B cell (primary cell): ENCODE measurements at regions of chr3 and their contacts with region 1.

Region 1: GRCh38 chr3:100708967-100709841 is at the start of gene TFG:
- DNase-seq: peak; percentile 99
- ATAC-seq: peak; percentile 94
- H3K4me3 ChIP-seq: peak within 1 kb of the TSS; percentile 47 to 85 (median 78)
- H3K4me3 Mint-ChIP-seq: peak within 1 kb of the TSS; percentile 92
- H3K27ac ChIP-seq: peak within 1 kb of the TSS; percentile 76 to 90
- H3K27ac Mint-ChIP-seq: peak within 1 kb of the TSS; percentile 97
- H3K4me1 ChIP-seq: peaks cover 19 to 21% of the 10 kb centered on the region in 2 donors
- H3K4me1 Mint-ChIP-seq: peaks cover 36% of the 10 kb centered on the region
- H3K27me3 ChIP-seq: peaks cover 0 to 21% (median 8%) of the 10 kb centered on the region in 4 experiments
- H3K27me3 Mint-ChIP-seq: peaks cover 22% of the 10 kb centered on the region
- CTCF ChIP-seq: no peak
- total RNA-seq, gene TFG: 44.0 and 51.6 TPM in 2 replicates

Region 2: DNA sequence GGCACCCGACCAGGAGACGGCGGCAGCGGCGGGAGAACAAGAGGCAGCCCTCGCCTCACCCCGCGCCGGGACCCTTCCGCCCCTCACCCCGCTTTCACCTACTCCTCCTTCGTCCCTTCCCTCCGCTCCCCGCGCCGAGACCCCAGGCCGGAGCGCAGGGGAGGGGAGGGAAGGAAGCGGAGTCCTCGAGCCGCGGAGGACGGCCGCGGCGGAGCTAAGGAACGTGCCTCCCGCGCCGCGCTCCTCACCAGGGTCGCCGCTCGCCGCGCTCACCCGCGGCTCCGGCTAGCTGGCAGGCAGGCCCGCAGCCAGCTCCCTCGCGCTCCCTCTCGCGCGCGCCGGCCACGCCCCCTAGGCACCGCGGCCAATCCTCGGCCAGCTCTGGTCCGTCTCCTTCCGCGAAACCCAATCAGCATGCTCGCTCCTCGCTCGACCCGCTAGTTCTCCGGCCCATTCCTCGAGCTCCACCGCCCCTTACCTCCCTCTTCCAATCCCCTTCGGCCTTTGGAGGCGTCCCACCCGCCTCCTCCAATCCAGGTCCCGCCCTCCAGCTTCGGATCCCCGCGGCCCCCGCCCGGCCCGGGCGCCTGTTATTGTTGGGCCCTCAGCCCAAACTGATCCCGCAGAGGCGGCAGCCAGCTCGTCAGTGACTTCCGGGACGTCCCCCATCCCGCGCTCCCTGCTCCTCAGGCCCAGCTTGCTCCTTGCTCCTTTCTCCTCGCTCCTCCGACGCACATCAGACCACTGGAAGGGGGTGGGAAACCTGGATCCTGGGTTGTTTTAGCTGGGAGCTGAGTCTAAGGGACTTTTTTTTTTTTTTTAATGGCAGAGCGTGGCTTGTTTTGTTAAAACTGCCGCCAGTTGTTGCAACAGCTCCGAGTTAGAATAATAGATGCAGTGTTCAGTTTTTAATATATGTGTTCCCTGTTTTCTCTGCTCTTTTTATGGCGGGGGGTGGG is 1807.5 kb before region 1 on chr3 and contains the start of gene DCBLD2:
- CTCF ChIA-PET with region 1: no interaction called
- POLR2A ChIA-PET with region 1: no interaction called
- intact Hi-C with region 1: loop called (anchors 5 kb)
- DNase-seq: peak; percentile 95
- ATAC-seq: peak; percentile 98
- H3K4me3 ChIP-seq: peak within 1 kb of the TSS; percentile 60 to 93 (median 68)
- H3K4me3 Mint-ChIP-seq: peak within 1 kb of the TSS; percentile 97
- H3K27ac ChIP-seq: peak within 1 kb of the TSS in 1 of 2 donors; percentile 64
- H3K27ac Mint-ChIP-seq: peak within 1 kb of the TSS; percentile 84
- H3K4me1 ChIP-seq: peaks cover 10 to 12% of the 10 kb centered on the region in 2 donors
- H3K4me1 Mint-ChIP-seq: peaks cover 17% of the 10 kb centered on the region
- H3K27me3 ChIP-seq: peaks cover 0 to 7% (median 2%) of the 10 kb centered on the region in 4 experiments
- H3K27me3 Mint-ChIP-seq: peaks cover 12% of the 10 kb centered on the region
- CTCF ChIP-seq: no peak
- total RNA-seq, gene DCBLD2: 2.1 and 3.5 TPM in 2 replicates

Region 3: GRCh38 chr3:100334488-100335351 is 374.5 kb before region 1 on chr3 and contains the start of gene NIT2:
- CTCF ChIA-PET with region 1: no interaction called
- POLR2A ChIA-PET with region 1: no interaction called
- intact Hi-C with region 1: loop called (anchors 1 kb)
- DNase-seq: peak; percentile 88
- ATAC-seq: peak; percentile 98
- H3K4me3 ChIP-seq: peak within 1 kb of the TSS; percentile 54 to 82 (median 72)
- H3K4me3 Mint-ChIP-seq: peak within 1 kb of the TSS; percentile 96
- H3K27ac ChIP-seq: peak within 1 kb of the TSS; percentile 54 to 79
- H3K27ac Mint-ChIP-seq: peak within 1 kb of the TSS; percentile 91
- H3K4me1 ChIP-seq: peaks cover 5 to 16% of the 10 kb centered on the region in 2 donors
- H3K4me1 Mint-ChIP-seq: peaks cover 23% of the 10 kb centered on the region
- H3K27me3 ChIP-seq: no peaks in the 10 kb centered on the region
- H3K27me3 Mint-ChIP-seq: no peaks in the 10 kb centered on the region
- CTCF ChIP-seq: no peak
- total RNA-seq, gene NIT2: 34.4 and 36.5 TPM in 2 replicates

Region 4: GRCh38 chr3:100650651-100651611 is 58.3 kb before region 1 on chr3:
- CTCF ChIA-PET with region 1: no interaction called
- POLR2A ChIA-PET with region 1: no interaction called
- intact Hi-C with region 1: loop called (anchors 1 kb)
- DNase-seq: peak; percentile 66
- ATAC-seq: peak; percentile 74
- H3K4me3 ChIP-seq: peak overlapping the region in 1 of 5 experiments; percentile 11
- H3K4me3 Mint-ChIP-seq: peak overlapping the region; percentile 41
- H3K27ac ChIP-seq: peak overlapping the region in 1 of 2 donors; percentile 52
- H3K27ac Mint-ChIP-seq: peak overlapping the region; percentile 57
- H3K4me1 ChIP-seq: peaks cover 5 to 8% of the 10 kb centered on the region in 2 donors
- H3K4me1 Mint-ChIP-seq: peaks cover 8% of the 10 kb centered on the region
- H3K27me3 ChIP-seq: no peaks in the 10 kb centered on the region
- H3K27me3 Mint-ChIP-seq: peaks cover under 1% of the 10 kb centered on the region
- CTCF ChIP-seq: peak; percentile 33

Region 5: DNA sequence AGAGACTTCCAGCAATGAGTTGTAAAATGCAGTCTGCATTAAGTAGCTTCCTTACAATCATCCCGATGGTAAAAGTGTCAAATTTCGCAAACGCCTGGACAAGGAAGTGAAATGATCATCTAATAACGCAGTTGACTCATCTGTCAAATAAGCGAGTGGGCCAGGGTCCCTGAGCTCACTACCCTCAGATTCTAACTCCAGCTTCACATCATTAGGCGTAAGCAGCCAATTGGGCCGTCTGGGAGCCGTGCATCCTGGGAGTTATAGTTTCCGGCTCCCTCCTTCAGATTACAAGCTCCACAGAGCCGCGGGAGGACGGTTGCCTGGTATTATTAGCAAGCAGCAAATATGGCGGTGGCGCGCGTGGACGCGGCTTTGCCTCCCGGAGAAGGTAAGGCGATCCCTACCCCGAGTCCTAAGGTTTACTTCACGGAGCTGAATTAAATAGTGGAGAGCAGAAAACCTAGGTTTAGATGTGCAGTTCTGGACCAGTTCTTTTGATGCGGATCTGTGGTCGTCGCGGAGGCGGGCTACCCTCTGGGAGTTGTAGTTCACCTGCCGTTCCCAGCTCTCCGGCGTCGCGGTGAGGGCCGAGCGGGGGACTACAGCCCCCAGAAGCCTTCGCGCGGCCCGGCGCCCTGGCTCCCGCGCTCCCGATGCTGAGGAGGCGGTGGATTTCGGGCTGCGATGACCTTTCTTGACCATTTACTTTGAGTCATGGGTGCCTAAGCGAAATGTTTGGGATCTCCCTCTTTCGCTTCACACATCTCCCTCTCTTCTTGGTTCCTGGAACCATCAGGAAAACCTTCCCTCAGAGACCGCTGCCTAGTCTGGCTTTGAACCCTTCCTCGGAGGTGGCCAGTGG is 1015.4 kb after region 1 on chr3 and contains the start of gene CEP97:
- CTCF ChIA-PET with region 1: no interaction called
- POLR2A ChIA-PET with region 1: no interaction called
- intact Hi-C with region 1: loop called (anchors 2 kb)
- DNase-seq: peak; percentile 91
- ATAC-seq: peak; percentile 93
- H3K4me3 ChIP-seq: peak within 1 kb of the TSS; percentile 77 to 99 (median 84)
- H3K4me3 Mint-ChIP-seq: peak within 1 kb of the TSS; percentile 100
- H3K27ac ChIP-seq: peak within 1 kb of the TSS; percentile 70 to 74
- H3K27ac Mint-ChIP-seq: peak within 1 kb of the TSS; percentile 99
- H3K4me1 ChIP-seq: peaks cover 30 to 34% of the 10 kb centered on the region in 2 donors
- H3K4me1 Mint-ChIP-seq: peaks cover 37% of the 10 kb centered on the region
- H3K27me3 ChIP-seq: no peaks in the 10 kb centered on the region
- H3K27me3 Mint-ChIP-seq: no peaks in the 10 kb centered on the region
- CTCF ChIP-seq: no peak
- total RNA-seq, gene CEP97: 15.0 and 15.4 TPM in 2 replicates